ENCODE measurements at regions of chr7 and their contacts with region 1.

Region 1: DNA sequence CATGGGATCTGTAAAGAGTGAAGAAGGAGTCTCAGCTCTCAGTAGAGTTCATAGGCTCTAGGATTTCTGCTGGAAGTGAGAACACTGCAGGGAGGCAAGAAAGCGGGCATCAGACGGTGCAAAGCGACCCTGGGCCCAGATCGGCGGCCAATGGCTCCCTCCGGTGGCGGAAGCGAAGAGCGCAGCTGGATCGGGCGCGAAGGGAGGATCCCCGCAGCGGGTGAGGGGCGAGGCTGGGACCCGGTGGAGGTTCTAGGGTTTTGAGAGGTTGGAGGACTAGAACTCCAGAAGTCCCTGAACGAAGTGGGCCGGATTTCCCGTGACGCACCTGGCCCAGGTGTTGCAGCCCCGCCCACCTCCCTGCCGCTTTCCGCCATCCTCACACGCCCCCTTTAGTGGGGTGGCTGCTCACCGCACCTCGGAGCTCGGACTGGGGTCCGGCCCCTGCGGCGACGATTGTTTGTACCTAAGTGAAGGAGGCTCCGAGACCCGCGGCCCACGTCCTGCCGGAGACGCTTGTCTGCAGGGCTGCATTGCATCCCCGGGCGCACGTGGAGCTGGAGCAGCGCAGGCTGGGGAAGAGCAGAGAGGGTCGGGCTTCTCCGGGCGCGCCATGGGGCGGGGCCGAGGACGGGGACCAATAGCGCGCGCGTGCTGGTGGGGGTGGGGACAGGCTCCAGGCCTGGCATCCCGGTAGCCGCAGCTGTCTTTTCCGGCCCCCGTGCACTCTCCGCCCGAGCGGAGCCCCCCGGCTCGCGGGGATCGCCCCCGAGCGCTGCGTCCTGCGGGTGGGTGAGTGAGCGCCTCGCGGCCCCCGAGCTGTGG is at the start of gene SLC12A9:
- DNase-seq: peak; percentile 91
- ATAC-seq: peak; percentile 90
- H3K4me3 ChIP-seq: peak within 1 kb of the TSS; percentile 55 to 87 (median 71)
- H3K4me3 Mint-ChIP-seq: peak within 1 kb of the TSS; percentile 95
- H3K27ac ChIP-seq: peak within 1 kb of the TSS; percentile 47 to 65
- H3K27ac Mint-ChIP-seq: peak within 1 kb of the TSS; percentile 93
- H3K4me1 ChIP-seq: peaks cover 11 to 23% of the 10 kb centered on the region in 2 donors
- H3K4me1 Mint-ChIP-seq: peaks cover 24% of the 10 kb centered on the region
- H3K27me3 ChIP-seq: no peaks in the 10 kb centered on the region
- H3K27me3 Mint-ChIP-seq: no peaks in the 10 kb centered on the region
- CTCF ChIP-seq: peak; percentile 96
- total RNA-seq, gene SLC12A9: 77.4 and 80.1 TPM in 2 replicates

Region 2: GRCh38 chr7:100478966-100479665 is 373.1 kb before region 1 on chr7 and contains the start of gene TSC22D4:
- CTCF ChIA-PET with region 1: interaction called, 3 read pairs
- POLR2A ChIA-PET with region 1: no interaction called
- intact Hi-C with region 1: loop called (anchors 5 kb)
- DNase-seq: peak; percentile 92
- ATAC-seq: peak; percentile 70
- H3K4me3 ChIP-seq: peak within 1 kb of the TSS; percentile 90 to 99 (median 96)
- H3K4me3 Mint-ChIP-seq: peak within 1 kb of the TSS; percentile 97
- H3K27ac ChIP-seq: peak within 1 kb of the TSS; percentile 72 to 89
- H3K27ac Mint-ChIP-seq: peak within 1 kb of the TSS; percentile 91
- H3K4me1 ChIP-seq: peaks cover 34 to 51% of the 10 kb centered on the region in 2 donors
- H3K4me1 Mint-ChIP-seq: peaks cover 37% of the 10 kb centered on the region
- H3K27me3 ChIP-seq: no peaks in the 10 kb centered on the region
- H3K27me3 Mint-ChIP-seq: no peaks in the 10 kb centered on the region
- CTCF ChIP-seq: no peak
- total RNA-seq, gene TSC22D4: 92.8 and 95.0 TPM in 2 replicates

Region 3: DNA sequence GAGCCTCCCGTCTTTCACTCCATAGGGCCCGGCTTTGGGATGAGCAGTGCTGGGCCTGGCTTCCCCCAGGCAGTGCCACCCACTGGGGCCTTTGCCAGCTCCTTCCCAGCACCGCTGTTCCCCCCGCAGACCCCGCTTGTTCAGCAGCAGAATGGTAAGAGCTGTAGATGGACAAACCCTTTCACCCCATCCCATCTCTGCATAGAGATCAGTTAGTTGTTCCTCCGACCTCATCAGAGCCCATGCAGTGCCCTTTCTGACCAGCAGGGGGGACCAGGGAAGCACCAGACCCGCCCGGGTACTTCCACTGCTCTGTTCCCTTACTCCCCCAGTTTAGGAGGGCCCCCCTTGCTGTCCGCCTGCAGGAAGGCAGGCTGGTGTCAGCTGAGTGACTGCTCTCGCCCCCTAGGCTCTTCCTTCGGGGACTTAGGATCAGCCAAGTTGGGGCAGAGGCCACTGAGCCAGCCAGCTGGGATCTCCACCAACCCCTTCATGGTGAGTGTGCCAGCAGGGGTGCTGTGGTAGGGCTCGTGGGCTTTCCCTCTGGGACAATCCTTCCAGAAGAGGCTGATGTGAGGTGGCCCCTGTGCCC is 288.4 kb before region 1 on chr7:
- CTCF ChIA-PET with region 1: interaction called, 4 read pairs
- POLR2A ChIA-PET with region 1: no interaction called
- intact Hi-C with region 1: loop called (anchors 1 kb)
- DNase-seq: peak; percentile 85
- ATAC-seq: peak; percentile 77
- H3K4me3 ChIP-seq: no peak overlapping the region
- H3K4me3 Mint-ChIP-seq: no peak overlapping the region
- H3K27ac ChIP-seq: no peak overlapping the region
- H3K27ac Mint-ChIP-seq: no peak overlapping the region
- H3K4me1 ChIP-seq: peaks cover 20 to 29% of the 10 kb centered on the region in 2 donors
- H3K4me1 Mint-ChIP-seq: peaks cover 26% of the 10 kb centered on the region
- H3K27me3 ChIP-seq: no peaks in the 10 kb centered on the region
- H3K27me3 Mint-ChIP-seq: no peaks in the 10 kb centered on the region
- CTCF ChIP-seq: peak; percentile 94

Region 4: DNA sequence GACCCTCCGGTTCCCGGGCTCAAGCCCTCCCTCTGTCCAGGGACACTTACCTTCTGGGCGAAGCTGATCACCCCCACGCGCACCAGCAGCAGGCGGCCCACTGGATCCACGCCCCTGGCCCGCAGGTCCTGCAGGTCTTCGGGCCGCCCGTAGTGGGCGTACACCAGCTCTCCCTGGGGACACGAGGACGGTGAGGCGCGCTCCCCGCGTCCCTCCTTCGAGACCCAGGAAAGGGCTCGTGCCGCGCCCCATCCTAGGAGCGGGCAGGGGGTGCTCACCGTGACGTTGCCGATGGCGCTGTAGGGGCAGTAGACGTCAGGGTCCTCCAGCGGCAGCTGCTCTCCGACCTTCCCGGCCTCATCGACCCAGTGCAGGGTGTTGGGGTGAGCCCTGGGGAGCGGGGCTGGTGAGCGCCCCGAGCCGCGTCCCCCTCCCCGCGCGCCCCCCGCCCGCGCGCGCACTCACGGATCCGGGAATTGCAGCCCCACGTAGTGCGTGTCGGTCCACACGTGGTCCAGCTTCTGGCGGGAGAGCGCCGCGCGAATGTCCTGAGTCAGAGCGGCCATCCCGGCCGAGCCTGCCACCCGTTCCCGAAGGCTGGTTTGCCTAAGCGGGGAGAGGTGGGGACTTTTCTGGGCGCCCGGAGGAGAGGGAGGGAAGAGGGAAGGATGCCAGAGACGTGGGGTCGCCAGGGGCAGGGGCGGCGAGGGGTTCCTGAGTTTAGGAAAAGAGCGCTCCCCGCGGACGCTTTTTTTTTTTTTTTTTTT is 219.1 kb before region 1 on chr7:
- CTCF ChIA-PET with region 1: interaction called, 5 read pairs
- POLR2A ChIA-PET with region 1: no interaction called
- intact Hi-C with region 1: loop called (anchors 5 kb)
- DNase-seq: peak; percentile 77
- ATAC-seq: peak; percentile 77
- H3K4me3 ChIP-seq: peak overlapping the region in 4 of 5 experiments; percentile 62 to 82 (median 72)
- H3K4me3 Mint-ChIP-seq: peak overlapping the region; percentile 90
- H3K27ac ChIP-seq: peak overlapping the region in 1 of 2 donors; percentile 48
- H3K27ac Mint-ChIP-seq: peak overlapping the region; percentile 83
- H3K4me1 ChIP-seq: peaks cover 6 to 15% of the 10 kb centered on the region in 2 donors
- H3K4me1 Mint-ChIP-seq: peaks cover 10% of the 10 kb centered on the region
- H3K27me3 ChIP-seq: peaks cover 0 to 3% (median 0%) of the 10 kb centered on the region in 4 experiments
- H3K27me3 Mint-ChIP-seq: no peaks in the 10 kb centered on the region
- CTCF ChIP-seq: no peak

Region 5: DNA sequence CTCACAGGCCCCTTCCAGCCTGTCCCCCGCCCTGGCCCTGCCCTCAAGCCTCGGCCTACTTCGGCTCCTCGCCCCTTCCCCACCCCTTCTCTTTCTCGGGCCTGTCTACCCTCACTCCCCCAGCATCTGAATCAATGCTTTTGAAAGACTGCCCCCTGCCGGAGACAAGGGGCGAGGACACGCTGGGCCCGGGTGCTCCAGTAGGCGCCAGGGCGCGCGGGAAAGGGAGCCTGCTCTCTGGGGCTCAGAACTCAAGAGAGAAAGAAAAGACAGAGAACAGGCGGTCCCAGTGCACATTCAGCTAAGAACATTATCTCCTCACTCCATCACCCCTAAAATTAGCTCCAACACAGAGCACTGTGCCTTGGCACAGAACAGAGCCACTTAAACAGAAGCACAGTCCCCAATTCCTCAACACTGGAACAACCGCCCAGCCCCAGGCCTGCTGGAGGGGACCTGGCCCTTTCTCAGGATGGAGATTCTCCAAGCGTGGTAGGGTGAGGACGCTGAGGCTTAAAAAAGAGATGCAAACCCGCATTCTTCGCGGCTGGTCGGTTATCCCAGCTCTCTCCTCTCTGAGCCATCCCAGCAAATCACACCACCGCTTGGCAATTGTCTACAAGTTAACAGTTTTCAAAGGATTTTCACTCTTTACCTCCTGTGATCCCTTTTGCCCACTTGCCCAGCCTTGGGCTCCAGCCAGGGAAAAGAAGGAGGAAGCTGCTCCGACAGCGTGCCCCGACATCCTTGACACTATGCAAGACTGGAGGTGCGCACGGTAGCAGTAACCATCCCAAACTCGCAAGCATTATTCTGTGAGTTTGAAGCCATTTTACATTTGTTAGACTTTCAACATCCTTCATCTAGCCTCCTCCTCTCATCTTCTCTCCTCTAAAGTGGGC is 160.3 kb before region 1 on chr7:
- CTCF ChIA-PET with region 1: interaction called, 15 read pairs
- POLR2A ChIA-PET with region 1: interaction called, 3 read pairs
- intact Hi-C with region 1: loop called (anchors 5 kb)
- DNase-seq: peak; percentile 86
- ATAC-seq: peak; percentile 60
- H3K4me3 ChIP-seq: peak overlapping the region in 2 of 5 experiments; percentile 58 to 79
- H3K4me3 Mint-ChIP-seq: peak overlapping the region; percentile 89
- H3K27ac ChIP-seq: no peak overlapping the region
- H3K27ac Mint-ChIP-seq: peak overlapping the region; percentile 92
- H3K4me1 ChIP-seq: peaks cover 52 to 55% of the 10 kb centered on the region in 2 donors
- H3K4me1 Mint-ChIP-seq: peaks cover 51% of the 10 kb centered on the region
- H3K27me3 ChIP-seq: no peaks in the 10 kb centered on the region
- H3K27me3 Mint-ChIP-seq: no peaks in the 10 kb centered on the region
- CTCF ChIP-seq: peak; percentile 88

Region 6: DNA sequence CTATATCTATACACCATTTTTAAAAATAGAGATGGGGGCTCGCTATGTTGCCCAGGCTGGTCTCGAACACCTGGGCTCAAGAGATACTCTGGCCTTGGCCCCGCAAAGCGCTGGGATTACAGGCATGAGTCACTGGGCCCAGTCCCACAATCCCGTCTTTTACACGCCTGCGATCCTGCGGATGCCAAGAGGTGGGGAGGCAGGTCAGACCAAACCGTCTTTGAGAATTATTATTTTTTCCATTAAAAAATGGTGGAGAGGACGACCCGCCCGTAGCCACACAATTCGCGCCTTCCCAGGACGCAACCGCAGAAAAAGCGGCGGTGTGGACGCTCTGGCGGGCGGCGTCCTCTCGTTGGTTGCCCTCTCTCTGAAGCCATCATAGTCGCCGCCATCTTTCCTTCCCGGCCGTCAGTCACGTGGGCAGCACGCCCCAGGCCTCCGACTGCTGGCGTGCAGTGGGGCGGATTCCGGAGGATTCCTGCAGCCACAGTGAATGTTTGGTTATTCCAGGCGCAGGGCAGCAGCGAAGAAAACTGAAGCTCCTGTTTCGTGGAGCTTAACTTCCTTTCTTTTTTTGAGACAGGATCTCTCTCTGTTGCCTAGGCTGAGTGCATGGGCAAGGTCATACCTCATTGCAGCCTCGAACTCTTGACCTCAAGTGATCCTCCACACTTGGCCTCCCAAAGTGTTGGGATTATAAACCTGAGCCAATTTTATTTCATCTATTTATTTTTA is 15.0 kb before region 1 on chr7:
- CTCF ChIA-PET with region 1: interaction called, 9 read pairs
- POLR2A ChIA-PET with region 1: interaction called, 3 read pairs
- intact Hi-C with region 1: loop called (anchors 1 kb)
- DNase-seq: peak; percentile 84
- ATAC-seq: peak; percentile 98
- H3K4me3 ChIP-seq: peak overlapping the region; percentile 30 to 75 (median 61)
- H3K4me3 Mint-ChIP-seq: peak overlapping the region; percentile 88
- H3K27ac ChIP-seq: peak overlapping the region; percentile 25 to 41
- H3K27ac Mint-ChIP-seq: peak overlapping the region; percentile 86
- H3K4me1 ChIP-seq: peaks cover 3 to 17% of the 10 kb centered on the region in 2 donors
- H3K4me1 Mint-ChIP-seq: peaks cover 14% of the 10 kb centered on the region
- H3K27me3 ChIP-seq: no peaks in the 10 kb centered on the region
- H3K27me3 Mint-ChIP-seq: no peaks in the 10 kb centered on the region
- CTCF ChIP-seq: no peak

Region 7: DNA sequence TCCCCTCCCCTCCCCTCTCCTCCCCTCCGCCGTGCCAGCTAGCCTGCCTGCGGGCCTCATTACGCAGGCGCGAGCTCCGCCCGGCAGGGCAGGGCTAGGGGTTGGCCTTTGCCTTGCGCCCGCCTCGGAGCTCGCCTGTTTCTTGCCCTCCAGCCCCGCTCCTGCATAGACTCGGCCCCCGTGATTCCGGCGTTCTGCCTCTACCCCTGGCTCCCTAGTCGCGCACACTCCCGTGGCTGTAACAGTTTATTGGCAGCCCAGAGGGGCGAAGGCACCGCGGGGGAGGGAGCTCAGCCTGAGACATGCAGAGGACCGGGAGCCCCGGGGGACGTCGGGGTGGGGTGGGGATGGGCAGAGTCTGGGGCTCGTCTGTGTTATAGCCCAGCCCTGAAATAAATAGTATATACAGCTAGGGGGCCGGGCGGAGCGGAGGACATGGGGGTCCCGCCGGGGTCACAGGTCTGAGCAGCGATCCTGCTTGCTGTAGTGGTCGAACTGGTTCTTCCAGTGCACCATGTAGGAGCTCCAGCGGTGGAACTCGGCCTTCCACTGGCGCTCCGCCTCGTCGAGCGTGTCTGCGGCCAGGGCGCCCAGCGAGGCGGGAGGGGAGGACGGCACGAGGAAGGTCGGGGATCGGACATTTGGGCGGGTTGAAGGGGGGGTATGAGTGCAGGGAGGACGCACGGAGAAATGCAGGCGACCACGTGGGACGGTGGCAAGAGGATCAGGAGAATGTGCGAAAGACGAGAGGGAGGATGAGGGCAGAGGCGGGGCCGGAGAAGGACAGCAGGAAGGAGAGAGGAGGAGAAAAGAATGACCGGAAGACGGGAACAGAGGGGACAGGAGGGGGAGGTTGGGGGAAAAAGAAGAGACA is 37.7 kb after region 1 on chr7:
- CTCF ChIA-PET with region 1: interaction called, 16 read pairs
- POLR2A ChIA-PET with region 1: interaction called, 7 read pairs
- intact Hi-C with region 1: loop called (anchors 1 kb)
- DNase-seq: peak; percentile 94
- ATAC-seq: peak; percentile 82
- H3K4me3 ChIP-seq: peak overlapping the region in 4 of 5 experiments; percentile 57 to 80 (median 72)
- H3K4me3 Mint-ChIP-seq: peak overlapping the region; percentile 87
- H3K27ac ChIP-seq: no peak overlapping the region
- H3K27ac Mint-ChIP-seq: peak overlapping the region; percentile 82
- H3K4me1 ChIP-seq: peaks cover 43 to 54% of the 10 kb centered on the region in 2 donors
- H3K4me1 Mint-ChIP-seq: peaks cover 48% of the 10 kb centered on the region
- H3K27me3 ChIP-seq: peaks cover 0 to 46% (median 12%) of the 10 kb centered on the region in 4 experiments
- H3K27me3 Mint-ChIP-seq: peaks cover 22% of the 10 kb centered on the region
- CTCF ChIP-seq: no peak